GM13977 (cell line): ENCODE measurements at regions of chr19 and their contacts with region 1.

Region 1: DNA sequence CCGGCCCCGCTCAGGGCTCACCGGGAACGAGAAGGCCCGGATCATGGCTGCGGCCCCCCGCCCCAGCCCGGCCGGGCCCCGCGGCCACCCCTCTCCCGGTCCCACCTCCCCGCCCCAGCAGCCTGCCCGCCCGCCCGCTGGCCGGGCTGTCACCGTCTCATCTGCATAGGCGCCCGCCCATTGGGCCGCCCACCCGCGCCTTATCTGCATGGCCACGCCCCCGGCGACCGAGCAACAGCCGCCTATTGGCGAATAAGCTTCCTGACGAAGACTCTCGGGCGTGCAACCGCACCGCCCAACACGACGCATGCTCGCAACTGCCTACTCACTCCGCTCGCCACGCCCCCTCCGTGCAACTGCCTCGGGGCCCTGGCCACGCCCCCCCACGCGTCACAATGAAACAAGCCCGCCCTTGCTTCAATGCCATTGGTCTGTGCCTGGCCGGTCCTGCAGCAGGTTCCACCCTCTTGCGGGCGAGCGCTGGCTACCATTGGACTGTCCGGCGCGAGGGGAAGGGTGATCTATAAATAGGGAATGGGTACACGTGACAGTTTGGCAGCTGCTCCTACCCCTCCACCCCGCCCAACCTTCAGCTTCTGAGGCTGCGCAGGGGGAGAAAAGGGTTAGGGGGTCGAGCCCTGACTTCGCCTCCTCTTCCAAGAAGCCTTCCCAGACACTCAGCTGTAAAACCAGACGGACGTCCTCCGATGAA is at the start of gene DACT3:
- DNase-seq: peak; percentile 100
- CTCF ChIP-seq: no peak

Region 2: GRCh38 chr19:46529622-46530462 is 131.3 kb before region 1 on chr19:
- in situ Hi-C with region 1: loop called (anchors 10 kb)
- DNase-seq: peak; percentile 81
- CTCF ChIP-seq: peak; percentile 87

Region 3: GRCh38 chr19:46614114-46614722 is 47.0 kb before region 1 on chr19:
- in situ Hi-C with region 1: loop called (anchors 5 kb)
- DNase-seq: peak; percentile 82
- CTCF ChIP-seq: peak; percentile 90

Region 4: GRCh38 chr19:46704379-46705076 is 43.4 kb after region 1 on chr19:
- in situ Hi-C with region 1: no loop called
- DNase-seq: peak; percentile 92
- CTCF ChIP-seq: peak; percentile 89